ENCODE measurements at regions of chrX and their contacts with region 1.

Region 1: DNA sequence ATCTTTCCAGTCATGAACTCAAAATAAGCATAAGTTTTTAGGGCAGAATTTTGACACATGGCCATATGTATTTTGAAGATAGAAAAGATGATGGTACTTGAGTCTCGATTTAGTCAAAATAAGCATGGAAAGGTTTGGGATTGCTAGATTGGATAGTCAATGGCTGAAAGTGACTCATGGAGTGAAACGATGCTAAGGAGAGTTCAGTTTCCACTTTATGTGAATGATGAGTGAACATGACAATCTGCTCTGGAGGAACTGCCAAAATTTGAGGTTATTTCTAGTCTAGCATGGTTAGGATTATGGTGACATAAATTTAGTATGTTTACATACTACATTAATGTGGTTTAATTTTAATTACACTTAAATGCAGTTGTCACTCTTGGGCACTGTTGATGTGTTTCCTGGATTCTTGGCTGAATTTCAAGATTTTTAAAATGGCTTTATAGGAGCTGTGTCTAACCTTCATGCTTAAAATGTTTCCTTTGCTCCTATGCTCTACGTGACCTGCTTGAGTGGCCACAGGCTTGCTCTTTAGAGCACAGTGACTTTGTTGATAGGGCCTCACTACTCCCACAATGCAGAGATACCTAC is 17.1 kb downstream of the DDX3X start:
- DNase-seq: peak; percentile 9
- ATAC-seq: peak; percentile 23; the same call in 1 of the 2 replicates
- H3K4me3 ChIP-seq: no peak overlapping the region
- H3K27ac ChIP-seq: no peak overlapping the region
- H3K4me1 ChIP-seq: no peaks in the 10 kb centered on the region
- H3K27me3 ChIP-seq: no peaks in the 10 kb centered on the region
- CTCF ChIP-seq: no peak

Region 2: DNA sequence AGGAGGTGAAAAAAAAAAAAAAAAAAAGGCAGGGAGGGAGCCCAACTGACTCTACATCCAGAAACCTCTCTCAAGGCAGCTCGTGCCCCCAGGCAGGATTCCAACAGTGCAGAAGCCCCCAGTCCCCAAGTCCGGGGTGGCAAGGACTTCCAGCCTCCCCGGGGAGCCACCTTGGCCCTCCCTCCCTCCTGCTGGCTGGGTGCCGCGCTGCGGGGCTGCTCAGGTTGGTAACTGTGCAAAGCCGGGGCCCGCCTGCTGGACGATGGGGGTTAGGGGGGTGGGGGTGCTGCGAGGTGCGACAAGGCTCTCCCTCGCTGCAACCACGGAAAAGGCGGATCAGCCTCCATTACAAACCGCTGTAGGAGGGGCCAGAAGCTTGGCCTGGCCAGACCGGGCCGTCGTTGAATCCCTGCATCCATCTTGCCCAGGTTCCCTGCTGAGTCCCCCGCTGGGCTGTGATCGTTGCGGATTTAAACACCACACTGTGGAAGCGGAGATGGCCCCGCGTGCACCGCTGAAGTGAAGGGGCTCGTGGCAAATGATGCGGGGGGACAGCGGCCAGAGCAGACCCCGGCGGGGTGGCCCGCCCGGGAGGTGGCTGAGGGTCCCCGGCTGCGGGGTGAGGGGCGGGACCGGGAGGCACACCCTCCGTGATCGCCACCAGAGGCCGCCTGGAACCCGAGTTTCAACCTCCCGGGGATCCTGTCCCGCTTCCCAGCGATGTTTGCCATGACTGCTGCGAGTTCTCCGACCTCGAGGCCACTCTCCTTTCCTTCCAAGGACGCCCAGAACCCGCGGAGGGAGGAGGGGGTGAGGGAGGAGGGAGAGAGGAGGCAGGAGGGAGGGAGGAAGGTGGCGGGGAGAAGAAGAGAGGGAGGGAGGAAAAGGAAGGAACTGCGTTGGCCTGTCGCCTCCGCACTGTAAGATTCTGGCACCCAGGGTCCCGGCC is 75.1 kb before region 1 on chrX:
- CTCF ChIA-PET with region 1: no interaction called
- POLR2A ChIA-PET with region 1: no interaction called
- intact Hi-C with region 1: loop called (anchors 2 kb)
- DNase-seq: peak; percentile 53
- ATAC-seq: peak; percentile 89
- H3K4me3 ChIP-seq: peak overlapping the region; percentile 79
- H3K27ac ChIP-seq: no peak overlapping the region
- H3K4me1 ChIP-seq: peaks cover 7% of the 10 kb centered on the region; the same call in 1 of the 2 replicates
- H3K27me3 ChIP-seq: no peaks in the 10 kb centered on the region
- CTCF ChIP-seq: peak; percentile 58

Region 3: GRCh38 chrX:41333744-41334259 is 17.3 kb before region 1 on chrX and contains the start of gene DDX3X:
- CTCF ChIA-PET with region 1: no interaction called
- POLR2A ChIA-PET with region 1: no interaction called
- intact Hi-C with region 1: loop called (anchors 1 kb)
- DNase-seq: peak; percentile 81
- ATAC-seq: peak; percentile 67
- H3K4me3 ChIP-seq: peak within 1 kb of the TSS; percentile 100
- H3K27ac ChIP-seq: peak within 1 kb of the TSS; percentile 91
- H3K4me1 ChIP-seq: peaks cover 28% of the 10 kb centered on the region
- H3K27me3 ChIP-seq: no peaks in the 10 kb centered on the region
- CTCF ChIP-seq: 0 out of 2 replicates have a peak, but pooled peaks have one; percentile 14
- total RNA-seq, gene DDX3X: 167 and 185 TPM in 2 replicates

Region 4: DNA sequence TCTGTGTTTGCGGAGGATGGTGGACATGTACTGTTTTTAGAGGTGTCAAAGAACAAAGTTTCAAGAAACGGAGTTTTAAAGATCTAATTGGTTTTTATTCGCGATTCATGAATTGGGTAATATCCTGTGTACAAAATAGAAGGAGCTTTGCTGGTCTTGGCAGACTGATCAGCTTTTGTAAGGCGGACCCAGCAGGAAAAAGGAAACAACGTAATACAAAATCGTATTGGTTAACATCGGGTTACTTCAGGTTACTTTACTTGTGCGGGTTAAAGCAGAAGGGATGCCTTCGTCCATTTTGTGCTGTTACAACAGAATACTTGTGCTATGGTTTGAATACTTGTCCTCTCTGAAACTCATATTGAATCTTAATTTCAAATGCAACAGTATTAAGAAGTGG is 84.6 kb after region 1 on chrX:
- CTCF ChIA-PET with region 1: no interaction called
- POLR2A ChIA-PET with region 1: no interaction called
- intact Hi-C with region 1: loop called (anchors 5 kb)
- DNase-seq: no peak
- ATAC-seq: no peak
- H3K4me3 ChIP-seq: no peak overlapping the region
- H3K27ac ChIP-seq: no peak overlapping the region
- H3K4me1 ChIP-seq: no peaks in the 10 kb centered on the region
- H3K27me3 ChIP-seq: no peaks in the 10 kb centered on the region
- CTCF ChIP-seq: no peak